ENCODE measurements at regions of chr20 and their contacts with region 1.

Region 1: GRCh38 chr20:4130404-4131189 is 115.2 kb upstream of the RNF24 start:
- DNase-seq: peak; percentile 92
- ATAC-seq: peak; percentile 89
- H3K4me3 Mint-ChIP-seq: no peak overlapping the region
- H3K27ac Mint-ChIP-seq: peak overlapping the region; percentile 90
- H3K4me1 Mint-ChIP-seq: peaks cover 42% of the 10 kb centered on the region
- H3K27me3 Mint-ChIP-seq: peaks cover 15% of the 10 kb centered on the region
- CTCF ChIP-seq: no peak

Region 2: DNA sequence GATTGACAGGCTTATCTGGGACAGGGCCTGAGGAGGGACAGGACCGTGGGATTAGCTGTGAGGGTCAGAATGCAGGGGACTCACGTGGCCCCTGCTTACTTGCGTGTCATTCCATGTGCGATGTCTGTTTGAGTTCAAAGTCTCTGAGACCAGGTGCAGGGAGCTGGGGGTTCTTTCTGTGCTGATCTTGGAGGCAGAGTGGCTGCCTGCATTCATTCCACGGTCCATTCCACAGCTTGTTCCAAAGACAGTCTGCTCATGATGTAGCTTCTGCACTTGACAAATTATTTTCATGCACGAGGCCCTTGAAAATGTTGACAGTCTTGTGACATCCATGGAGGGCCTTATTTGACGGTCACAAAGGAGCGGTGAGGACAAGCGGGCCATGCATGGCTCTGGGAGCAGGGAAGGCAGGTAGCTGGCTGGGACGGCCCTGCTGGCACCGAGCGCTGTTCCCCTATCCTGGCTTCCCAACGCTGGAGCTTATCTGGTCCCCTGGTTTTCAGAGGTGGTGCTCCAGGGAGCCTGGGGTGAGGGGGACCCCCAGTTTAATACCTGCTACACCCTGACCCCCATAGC is 41.0 kb after region 1 on chr20:
- CTCF ChIA-PET with region 1: no interaction called
- POLR2A ChIA-PET with region 1: no interaction called
- intact Hi-C with region 1: loop called (anchors 5 kb)
- DNase-seq: no peak
- ATAC-seq: no peak
- H3K4me3 Mint-ChIP-seq: peak overlapping the region; percentile 77
- H3K27ac Mint-ChIP-seq: peak overlapping the region; percentile 62
- H3K4me1 Mint-ChIP-seq: peaks cover 31% of the 10 kb centered on the region
- H3K27me3 Mint-ChIP-seq: no peaks in the 10 kb centered on the region
- CTCF ChIP-seq: no peak

Measured in activated CD8-positive, alpha-beta T cell treated with anti-CD3 and anti-CD28 coated beads for 36 hours (primary cell).